ENCODE measurements at regions of chr13 and their contacts with region 1.

Region 1: DNA sequence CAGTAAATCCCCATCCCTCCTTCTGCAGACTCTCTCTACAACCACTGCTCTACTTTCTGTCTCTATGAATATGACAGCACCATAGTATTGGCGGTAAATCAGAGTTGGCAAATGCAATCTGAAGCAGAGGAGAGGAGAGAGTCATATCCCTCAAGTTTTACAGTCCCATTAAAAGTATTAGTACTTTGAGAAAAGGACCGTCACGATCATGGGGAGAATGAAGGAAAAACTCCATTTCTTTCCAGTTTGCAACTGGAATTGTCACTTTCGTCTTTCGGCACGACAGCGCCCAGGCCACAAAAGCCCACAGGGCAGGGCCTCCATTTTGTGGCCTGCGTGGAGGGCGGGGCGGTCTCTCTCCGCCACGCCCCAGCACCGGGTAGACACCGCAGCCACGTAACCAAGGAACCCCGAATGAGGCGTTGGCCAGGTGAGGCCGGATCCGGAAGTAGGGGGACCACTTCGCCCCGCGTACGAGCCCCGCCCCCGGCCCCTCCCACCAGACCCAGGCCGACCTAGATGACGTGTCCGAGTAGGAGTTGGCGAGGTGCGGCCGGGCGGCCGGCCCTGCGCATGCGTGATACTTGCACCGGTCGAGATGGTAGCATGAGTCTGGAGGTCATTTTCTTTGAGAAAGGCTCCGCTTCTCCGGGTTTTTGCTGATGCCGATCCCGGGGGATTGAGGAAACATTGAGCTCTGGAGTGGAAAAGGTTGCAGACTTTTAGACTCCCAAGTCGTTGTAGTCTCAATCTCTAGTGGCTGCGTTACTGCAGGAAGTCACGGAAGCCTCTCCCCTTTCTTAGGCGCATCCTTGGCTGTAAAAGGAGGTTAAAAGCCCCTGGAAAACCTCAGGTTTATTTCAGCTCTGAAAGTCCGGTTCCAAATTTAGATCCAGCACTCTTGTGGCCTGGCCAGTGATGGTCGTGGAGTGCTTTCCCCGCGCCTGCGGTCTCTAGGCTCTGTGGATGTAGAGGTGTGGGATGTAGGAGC is 2.8 kb upstream of the TM9SF2 start:
- DNase-seq: peak; percentile 90 to 98 (median 94)

Region 2: GRCh38 chr13:98994896-98995295 is 503.6 kb before region 1 on chr13:
- intact Hi-C with region 1: no loop called
- DNase-seq: peak in 2 of 42 donors; percentile 3 to 14

Region 3: GRCh38 chr13:99191879-99192399 is 306.5 kb before region 1 on chr13:
- intact Hi-C with region 1: no loop called
- DNase-seq: no peak

Region 4: DNA sequence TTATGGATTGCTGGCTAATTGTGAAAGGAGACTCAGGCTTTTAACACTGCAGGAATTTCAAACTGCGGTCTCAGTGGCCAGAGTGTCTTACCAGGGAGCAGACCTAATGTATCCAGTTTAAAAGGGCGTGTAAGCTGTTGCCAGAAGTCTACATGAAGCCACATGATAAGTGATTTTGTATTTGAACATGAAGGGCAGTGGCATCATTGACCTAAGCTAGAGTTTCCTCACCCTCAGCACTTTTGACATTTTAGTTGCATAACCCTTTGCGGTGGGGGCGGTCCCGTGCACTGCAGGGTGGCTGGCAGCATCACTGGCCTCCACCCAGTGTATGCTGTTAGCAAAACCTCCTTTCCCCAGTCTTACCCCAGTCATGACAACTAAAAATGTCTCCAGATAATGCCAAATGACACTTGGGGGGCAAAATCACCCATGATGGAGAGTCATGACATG is 216.6 kb before region 1 on chr13:
- intact Hi-C with region 1: no loop called
- DNase-seq: peak in 7 of 42 donors; percentile 18 to 46 (median 30)

Region 5: DNA sequence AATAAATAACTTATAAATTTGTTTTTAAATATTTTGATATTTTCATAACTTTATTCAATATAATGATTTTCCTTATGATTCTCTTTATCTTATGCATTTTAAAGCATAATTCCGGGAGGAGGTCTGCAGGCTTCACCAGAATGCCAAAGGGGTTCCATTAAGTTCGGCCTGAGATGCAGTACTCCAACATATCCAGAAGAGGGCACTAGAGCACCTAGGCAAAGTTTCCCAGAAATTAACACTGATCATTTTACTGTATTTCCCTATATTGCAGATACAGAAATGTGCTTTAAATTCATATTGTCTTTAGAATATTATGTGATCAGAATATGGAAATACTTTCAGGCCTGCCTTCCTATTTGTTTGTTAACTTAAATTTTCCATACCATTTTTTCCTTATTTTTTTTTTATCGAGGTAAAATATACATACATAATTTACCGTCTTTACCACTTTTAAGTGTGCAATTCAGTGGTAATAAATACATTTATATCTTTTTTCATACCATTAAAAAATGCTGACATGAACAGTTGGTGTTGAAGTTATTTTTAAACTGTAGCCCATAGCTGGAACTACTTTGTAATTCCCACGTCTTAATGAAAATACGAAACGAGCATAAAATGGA is 56.1 kb before region 1 on chr13:
- intact Hi-C with region 1: loop called (anchors 10 kb)
- DNase-seq: peak in 31 of 42 donors; percentile 27 to 83 (median 54)

Region 6: GRCh38 chr13:99600318-99600717 is 101.9 kb after region 1 on chr13:
- intact Hi-C with region 1: loop called (anchors 5 kb)
- DNase-seq: no peak

Measured in head of caudate nucleus (tissue), 42 donors.